Right cardiac atrium (tissue), 5 donors: ENCODE measurements at regions of chr15 and their contacts with region 1.

Region 1: GRCh38 chr15:74956648-74957300 is at the start of gene RPP25:
- DNase-seq: peak; percentile 85 to 94 (median 93)
- ATAC-seq: peak; percentile 90 to 91
- H3K4me3 ChIP-seq: peak within 1 kb of the TSS; percentile 53
- H3K27ac ChIP-seq: peak within 1 kb of the TSS; percentile 32
- H3K4me1 ChIP-seq: peaks cover 5% of the 10 kb centered on the region
- H3K27me3 ChIP-seq: no peaks in the 10 kb centered on the region
- total RNA-seq, gene RPP25: 5.3 to 8.1 (median 6.3) TPM

Region 2: DNA sequence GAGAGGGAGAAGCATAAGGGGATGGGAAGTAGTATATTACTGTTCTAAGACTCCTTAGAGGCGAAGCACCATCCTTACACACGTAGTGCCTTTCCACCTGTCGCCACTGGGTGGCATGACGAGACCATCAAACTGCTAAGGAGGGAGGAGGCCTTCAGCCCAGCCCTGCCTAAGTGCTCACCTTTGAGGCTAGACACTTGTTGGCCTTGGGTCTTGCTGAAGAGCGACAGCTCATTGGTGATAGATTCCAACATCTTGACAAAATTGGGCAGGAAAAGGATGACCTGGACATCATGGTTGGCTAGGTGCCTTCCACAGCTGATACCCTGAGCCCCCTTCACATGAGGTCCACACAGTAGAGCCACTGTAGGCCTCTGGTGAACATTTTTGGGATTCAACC is 321.5 kb before region 1 on chr15:
- intact Hi-C with region 1: loop called in 2 of 4 experiments (anchors 5 to 10 kb)
- DNase-seq: peak; percentile 55 to 79 (median 75)
- ATAC-seq: peak; percentile 58 to 72
- H3K4me3 ChIP-seq: no peak overlapping the region
- H3K27ac ChIP-seq: no peak overlapping the region
- H3K4me1 ChIP-seq: no peaks in the 10 kb centered on the region
- H3K27me3 ChIP-seq: no peaks in the 10 kb centered on the region

Region 3: DNA sequence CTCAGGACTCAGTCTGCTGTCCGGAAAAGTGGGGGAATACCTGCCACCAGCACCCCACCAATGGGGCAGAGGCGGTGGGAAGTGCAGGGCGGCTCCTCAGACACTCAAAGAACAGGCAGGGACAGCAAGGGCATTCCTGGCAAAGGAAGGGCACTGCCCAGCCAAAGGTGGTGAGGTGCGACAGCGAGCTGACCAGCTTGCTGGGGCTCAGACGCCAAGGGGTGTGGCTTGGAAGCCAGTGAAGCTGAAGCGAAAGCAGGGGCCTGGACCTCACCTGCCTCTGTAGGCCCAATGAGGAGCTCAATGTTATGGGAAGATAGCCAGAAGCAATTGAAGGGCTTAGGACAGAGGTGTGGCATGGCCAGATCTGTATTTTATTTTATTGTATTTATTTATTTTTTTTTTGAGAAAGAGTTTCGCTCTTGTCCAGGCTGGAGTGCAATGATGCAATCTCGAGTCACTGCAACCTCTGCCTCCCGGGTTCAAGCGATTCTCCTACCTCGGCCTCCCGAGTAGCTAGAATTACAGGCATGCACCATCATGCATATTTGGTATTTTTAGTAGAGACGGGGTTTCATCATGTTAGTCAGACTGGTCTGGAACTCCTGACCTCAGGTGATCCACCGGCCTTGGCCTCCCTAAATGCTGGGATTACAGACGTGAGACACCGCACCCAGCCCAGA is 148.6 kb before region 1 on chr15:
- intact Hi-C with region 1: no loop called
- DNase-seq: peak in 2 of 3 donors; percentile 75
- ATAC-seq: peak; percentile 22 to 48
- H3K4me3 ChIP-seq: no peak overlapping the region
- H3K27ac ChIP-seq: no peak overlapping the region
- H3K4me1 ChIP-seq: no peaks in the 10 kb centered on the region
- H3K27me3 ChIP-seq: no peaks in the 10 kb centered on the region

Region 4: GRCh38 chr15:75171408-75171807 is 214.6 kb after region 1 on chr15:
- intact Hi-C with region 1: no loop called
- DNase-seq: no peak
- ATAC-seq: peak in 1 of 2 donors; percentile 73
- H3K4me3 ChIP-seq: no peak overlapping the region
- H3K27ac ChIP-seq: no peak overlapping the region
- H3K4me1 ChIP-seq: peaks cover 3% of the 10 kb centered on the region
- H3K27me3 ChIP-seq: no peaks in the 10 kb centered on the region

Region 5: DNA sequence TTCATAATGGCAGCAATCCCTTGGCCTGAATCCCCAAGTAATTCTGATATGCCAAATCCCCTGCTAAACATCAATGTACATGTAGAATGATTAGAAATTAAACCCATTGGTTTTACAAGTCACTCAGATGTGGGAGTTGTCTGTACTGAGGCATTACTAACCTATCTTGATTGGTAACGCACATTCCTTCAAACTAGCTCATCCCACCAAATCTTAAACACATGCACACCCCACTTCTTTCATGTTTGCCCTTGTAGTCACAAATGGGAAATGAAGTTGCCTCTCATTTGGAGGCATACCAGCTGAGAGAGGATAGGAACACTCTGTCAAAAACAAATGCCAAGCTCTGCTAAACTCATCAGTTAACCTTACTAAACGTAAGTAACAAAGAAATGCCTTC is 440.7 kb after region 1 on chr15:
- intact Hi-C with region 1: no loop called
- DNase-seq: no peak
- ATAC-seq: no peak
- H3K4me3 ChIP-seq: no peak overlapping the region
- H3K27ac ChIP-seq: no peak overlapping the region
- H3K4me1 ChIP-seq: no peaks in the 10 kb centered on the region
- H3K27me3 ChIP-seq: no peaks in the 10 kb centered on the region